HEK293 (cell line): ENCODE measurements at regions of chr3 and their contacts with region 1.

Region 1: GRCh38 chr3:17233398-17233800 is 348.6 kb downstream of the PLCL2 start:
- H3K4me3 ChIP-seq: no peak overlapping the region
- H3K27ac ChIP-seq: no peak overlapping the region
- H3K4me1 ChIP-seq: no peaks in the 10 kb centered on the region
- CTCF ChIP-seq: peak; percentile 61

Region 2: DNA sequence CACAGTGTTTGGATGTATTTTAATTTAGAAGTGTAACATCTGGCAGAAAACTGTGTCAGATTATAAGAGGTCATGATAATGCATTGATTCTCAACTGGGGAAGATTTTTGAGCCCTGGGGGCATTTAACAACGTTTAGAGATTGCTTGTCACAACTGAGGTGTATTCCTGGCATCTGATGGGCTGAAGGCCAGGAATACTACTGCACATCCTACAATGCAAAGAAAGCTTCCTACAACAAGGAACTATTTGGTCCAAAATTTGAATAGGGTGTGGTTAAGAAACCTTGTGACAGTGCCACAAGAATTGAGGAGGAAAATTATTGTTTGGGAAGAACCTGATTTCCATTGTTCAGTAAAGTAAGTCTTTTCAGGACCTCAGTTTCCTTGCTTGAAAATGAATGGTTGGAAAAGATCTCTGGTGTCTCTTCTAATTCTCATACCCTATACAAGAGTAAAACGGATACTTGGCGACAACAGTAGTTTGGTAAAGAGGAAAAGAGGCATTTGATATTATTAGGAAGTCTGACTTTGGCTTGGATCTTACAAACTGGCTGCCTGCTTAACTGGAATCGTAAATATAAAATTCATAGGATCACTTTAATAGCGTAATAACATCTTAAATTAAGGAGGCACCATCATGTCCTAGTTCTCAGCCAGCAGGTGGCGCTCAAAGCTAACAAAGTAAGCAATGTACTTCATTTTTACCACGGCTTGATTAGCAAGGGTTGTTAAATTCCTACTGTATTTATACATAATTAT is 632.4 kb before region 1 on chr3:
- CTCF ChIA-PET with region 1: interaction called, 59 read pairs
- POLR2A ChIA-PET with region 1: no interaction called
- H3K4me3 ChIP-seq: no peak overlapping the region
- H3K27ac ChIP-seq: no peak overlapping the region
- H3K4me1 ChIP-seq: no peaks in the 10 kb centered on the region
- CTCF ChIP-seq: peak; percentile 40; the same call in 1 of the 2 replicates

Region 3: DNA sequence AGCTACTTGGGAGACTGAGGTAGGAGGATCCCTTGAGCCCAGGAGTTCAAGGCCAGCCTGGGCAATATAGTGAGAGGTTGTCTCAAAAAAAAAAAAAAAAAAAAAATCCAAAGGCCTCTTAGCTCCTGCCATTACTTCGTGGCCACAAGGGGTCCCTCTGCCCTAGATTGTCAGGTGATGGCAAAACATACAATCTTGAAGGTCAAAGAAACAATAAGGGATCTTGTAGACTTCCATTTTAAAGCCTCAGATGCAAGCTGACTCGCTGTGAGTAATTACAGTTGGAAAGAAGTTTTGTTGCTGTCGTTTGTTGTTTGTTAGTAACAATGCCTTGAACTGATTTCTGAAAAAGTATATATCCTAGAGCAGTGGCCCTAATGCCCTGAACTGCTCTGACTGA is 404.6 kb before region 1 on chr3:
- CTCF ChIA-PET with region 1: interaction called, 16 read pairs
- POLR2A ChIA-PET with region 1: no interaction called
- H3K4me3 ChIP-seq: no peak overlapping the region
- H3K27ac ChIP-seq: no peak overlapping the region
- H3K4me1 ChIP-seq: no peaks in the 10 kb centered on the region
- CTCF ChIP-seq: no peak